Caco-2 (cell line): ENCODE measurements at regions of chr6 and their contacts with region 1.

Region 1: DNA sequence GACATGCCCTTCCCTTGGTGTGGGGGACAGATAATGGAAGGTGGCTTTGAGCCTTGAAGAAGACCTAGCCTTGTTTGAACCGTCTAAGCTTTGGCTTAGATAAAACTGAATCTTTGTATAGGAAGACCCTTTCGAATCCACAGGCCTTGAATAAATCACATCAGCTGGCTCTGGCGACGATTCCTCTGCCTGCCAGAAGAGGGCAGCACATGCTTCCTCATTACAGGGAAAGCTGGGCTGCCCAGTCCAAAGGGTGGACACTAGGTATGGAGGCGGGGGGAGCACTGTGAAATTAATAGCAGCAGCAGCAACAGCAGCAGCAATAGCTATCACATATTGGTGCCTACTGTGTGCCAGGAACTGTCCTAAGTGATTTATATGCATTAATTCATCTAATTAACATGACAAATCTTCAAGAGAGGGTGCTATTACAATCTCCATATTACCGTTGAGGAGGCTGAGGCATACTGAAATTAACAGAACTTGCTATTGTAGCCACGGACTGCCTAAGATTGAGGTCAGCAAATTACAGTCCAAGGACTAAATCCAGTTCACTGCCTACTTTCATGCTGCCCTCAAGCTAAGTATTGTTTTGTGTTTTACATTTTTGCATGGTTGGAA is 85.1 kb downstream of the CLIC5 start:
- DNase-seq: peak; percentile 69 to 75
- H3K4me3 ChIP-seq: no peak overlapping the region
- H3K4me3 Mint-ChIP-seq: no peak overlapping the region
- H3K27ac Mint-ChIP-seq: no peak overlapping the region
- H3K4me1 ChIP-seq: 0 out of 2 replicates have a peak, but pooled peaks cover 4% of the 10 kb centered on the region
- H3K4me1 Mint-ChIP-seq: no peaks in the 10 kb centered on the region
- H3K27me3 ChIP-seq: no peaks in the 10 kb centered on the region
- H3K27me3 Mint-ChIP-seq: no peaks in the 10 kb centered on the region
- CTCF ChIP-seq: peak; percentile 92 to 93

Region 2: DNA sequence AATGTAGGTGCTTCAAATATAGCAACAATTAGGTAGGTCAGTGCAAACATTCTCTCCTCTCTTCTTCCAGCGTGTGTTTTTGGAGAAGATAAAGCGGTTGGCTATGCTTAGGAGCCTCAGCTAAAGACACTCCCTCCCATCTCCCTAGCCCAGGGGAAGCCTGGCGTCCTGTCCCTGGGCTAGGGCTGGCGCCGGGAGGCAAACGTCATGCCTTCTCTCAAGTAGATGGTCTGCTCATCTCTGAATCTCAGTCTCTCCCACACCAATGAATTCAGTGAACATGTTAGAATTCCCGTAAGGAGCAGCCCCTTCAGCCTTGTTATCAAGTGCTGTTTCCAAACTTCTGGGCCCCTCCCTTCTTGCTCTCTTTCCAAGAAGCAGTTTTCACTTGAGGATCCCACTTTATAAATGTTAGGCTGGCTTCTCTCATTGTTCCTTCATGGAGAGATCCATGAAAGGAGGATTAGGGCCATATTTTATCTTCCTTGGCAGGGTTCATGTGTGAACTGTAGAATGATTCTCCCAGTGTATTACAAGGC is 57.6 kb before region 1 on chr6:
- CTCF ChIA-PET with region 1: no interaction called
- POLR2A ChIA-PET with region 1: no interaction called
- intact Hi-C with region 1: no loop called
- DNase-seq: no peak
- H3K4me3 ChIP-seq: no peak overlapping the region
- H3K4me3 Mint-ChIP-seq: no peak overlapping the region
- H3K27ac Mint-ChIP-seq: no peak overlapping the region
- H3K4me1 ChIP-seq: no peaks in the 10 kb centered on the region
- H3K4me1 Mint-ChIP-seq: no peaks in the 10 kb centered on the region
- H3K27me3 ChIP-seq: no peaks in the 10 kb centered on the region
- H3K27me3 Mint-ChIP-seq: no peaks in the 10 kb centered on the region
- CTCF ChIP-seq: no peak

Region 3: GRCh38 chr6:45946352-45946751 is 15.8 kb after region 1 on chr6:
- CTCF ChIA-PET with region 1: no interaction called
- POLR2A ChIA-PET with region 1: no interaction called
- intact Hi-C with region 1: loop called (anchors 2 kb)
- DNase-seq: peak; percentile 22 to 38
- H3K4me3 ChIP-seq: no peak overlapping the region
- H3K4me3 Mint-ChIP-seq: no peak overlapping the region
- H3K27ac Mint-ChIP-seq: no peak overlapping the region
- H3K4me1 ChIP-seq: peaks cover 13% of the 10 kb centered on the region
- H3K4me1 Mint-ChIP-seq: peaks cover 10% of the 10 kb centered on the region
- H3K27me3 ChIP-seq: no peaks in the 10 kb centered on the region
- H3K27me3 Mint-ChIP-seq: no peaks in the 10 kb centered on the region
- CTCF ChIP-seq: no peak